Activated CD8-positive, alpha-beta T cell treated with anti-CD3 and anti-CD28 coated beads for 36 hours (primary cell): ENCODE measurements at regions of chr3 and their contacts with region 1.

Region 1: GRCh38 chr3:100068826-100069225 is 45.5 kb downstream of the FILIP1L start:
- DNase-seq: peak; percentile 90
- ATAC-seq: peak; percentile 76
- H3K4me3 Mint-ChIP-seq: no peak overlapping the region
- H3K27ac Mint-ChIP-seq: no peak overlapping the region
- H3K4me1 Mint-ChIP-seq: peaks cover 39% of the 10 kb centered on the region
- H3K27me3 Mint-ChIP-seq: no peaks in the 10 kb centered on the region
- CTCF ChIP-seq: peak; percentile 82

Region 2: DNA sequence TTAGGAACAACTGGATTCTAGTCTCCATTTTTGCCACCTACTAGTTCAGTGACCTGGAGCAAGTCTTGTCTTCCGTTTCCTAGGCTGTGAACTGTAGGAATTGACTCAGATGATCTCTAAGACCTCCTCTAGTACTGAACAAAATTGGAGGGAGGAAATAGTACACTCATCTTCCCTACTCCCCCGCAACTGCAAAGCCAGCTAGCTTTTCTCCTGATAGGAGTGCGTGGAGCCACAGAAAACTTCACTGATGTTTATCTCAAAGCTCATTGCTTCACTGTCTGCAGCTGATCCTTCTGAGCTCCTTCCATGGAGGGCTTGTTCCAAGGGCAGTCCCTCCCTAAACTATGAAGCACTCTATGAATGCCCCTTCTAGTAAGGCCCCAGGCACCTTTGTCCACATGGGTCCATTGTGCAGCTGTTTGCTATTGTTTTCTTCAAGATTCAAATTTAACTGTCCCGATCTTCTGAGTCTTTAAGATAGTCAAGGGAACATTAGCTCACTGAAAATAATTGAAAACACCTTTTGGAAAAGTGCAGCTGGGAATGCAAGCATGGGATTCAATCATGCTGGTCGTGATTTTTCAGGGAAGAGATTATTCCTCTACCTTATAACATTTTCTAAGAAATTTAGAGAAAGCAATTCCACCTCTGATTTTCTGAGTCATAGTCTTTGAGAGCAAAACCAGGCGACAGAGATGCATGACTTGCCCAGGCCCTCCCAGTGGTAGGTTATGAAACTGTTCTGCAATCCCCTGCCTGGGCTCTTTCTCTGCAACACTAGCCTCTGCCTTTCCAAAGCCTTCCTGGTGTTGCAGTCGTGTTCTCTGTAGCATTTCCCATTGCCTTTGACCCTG is 21.2 kb after region 1 on chr3:
- CTCF ChIA-PET with region 1: interaction called, 41 read pairs
- POLR2A ChIA-PET with region 1: interaction called, 4 read pairs
- intact Hi-C with region 1: loop called (anchors 1 kb)
- DNase-seq: peak; percentile 57
- ATAC-seq: peak; percentile 88
- H3K4me3 Mint-ChIP-seq: no peak overlapping the region
- H3K27ac Mint-ChIP-seq: peak overlapping the region; percentile 22
- H3K4me1 Mint-ChIP-seq: peaks cover 29% of the 10 kb centered on the region
- H3K27me3 Mint-ChIP-seq: no peaks in the 10 kb centered on the region
- CTCF ChIP-seq: peak; percentile 54

Region 3: DNA sequence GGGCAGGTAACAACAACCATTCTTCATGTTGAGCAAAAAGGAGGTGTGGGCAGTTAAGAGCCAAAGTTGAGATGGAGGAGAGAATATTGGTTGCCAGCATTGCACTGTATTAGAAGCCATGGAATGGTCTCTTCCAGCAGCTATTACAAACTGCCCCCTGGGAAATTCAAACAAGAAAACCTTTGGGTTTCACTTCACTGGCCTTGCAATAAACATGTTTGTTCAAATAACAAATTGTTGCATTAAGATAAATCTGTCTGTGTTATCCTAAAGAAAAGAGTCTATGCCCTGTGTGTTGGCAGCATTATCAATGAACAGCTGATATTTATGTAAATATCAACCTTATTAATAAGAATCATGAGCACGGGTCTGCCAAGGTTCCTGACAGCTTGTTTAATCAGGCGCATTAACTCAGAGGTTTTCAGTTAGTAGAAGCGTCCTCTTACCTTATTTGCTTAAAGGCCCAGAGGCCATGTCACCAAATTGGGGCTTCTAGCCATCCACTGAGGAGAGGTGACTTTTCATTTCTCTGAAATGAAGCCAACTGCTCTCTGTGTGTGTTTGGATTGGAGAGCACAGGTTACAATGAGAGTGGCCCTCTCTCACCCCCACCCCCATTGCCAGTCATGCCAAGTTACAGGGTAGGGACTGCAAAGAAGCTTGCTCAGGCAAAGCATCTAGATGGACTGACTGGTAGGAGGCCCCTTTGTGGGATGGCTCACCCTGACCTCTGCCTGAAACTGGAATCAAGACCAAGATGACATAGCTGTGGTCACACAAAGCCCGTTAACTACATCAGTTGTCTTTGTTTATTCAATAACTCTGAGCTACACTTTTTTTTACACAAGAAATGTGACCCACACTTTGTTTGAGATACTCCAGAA is 35.0 kb after region 1 on chr3:
- CTCF ChIA-PET with region 1: interaction called, 16 read pairs
- POLR2A ChIA-PET with region 1: no interaction called
- intact Hi-C with region 1: no loop called
- DNase-seq: peak; percentile 60
- ATAC-seq: peak; percentile 88
- H3K4me3 Mint-ChIP-seq: no peak overlapping the region
- H3K27ac Mint-ChIP-seq: peak overlapping the region; percentile 93
- H3K4me1 Mint-ChIP-seq: peaks cover 33% of the 10 kb centered on the region
- H3K27me3 Mint-ChIP-seq: no peaks in the 10 kb centered on the region
- CTCF ChIP-seq: no peak

Region 4: GRCh38 chr3:100195375-100195774 is 126.5 kb after region 1 on chr3:
- CTCF ChIA-PET with region 1: no interaction called
- POLR2A ChIA-PET with region 1: no interaction called
- intact Hi-C with region 1: no loop called
- DNase-seq: no peak
- ATAC-seq: no peak
- H3K4me3 Mint-ChIP-seq: no peak overlapping the region
- H3K27ac Mint-ChIP-seq: no peak overlapping the region
- H3K4me1 Mint-ChIP-seq: no peaks in the 10 kb centered on the region
- H3K27me3 Mint-ChIP-seq: no peaks in the 10 kb centered on the region
- CTCF ChIP-seq: no peak

Region 5: GRCh38 chr3:100245927-100246326 is 177.1 kb after region 1 on chr3:
- CTCF ChIA-PET with region 1: interaction called, 14 read pairs
- POLR2A ChIA-PET with region 1: no interaction called
- intact Hi-C with region 1: no loop called
- DNase-seq: peak; percentile 52
- ATAC-seq: peak; percentile 68
- H3K4me3 Mint-ChIP-seq: no peak overlapping the region
- H3K27ac Mint-ChIP-seq: peak overlapping the region; percentile 19
- H3K4me1 Mint-ChIP-seq: peaks cover 16% of the 10 kb centered on the region
- H3K27me3 Mint-ChIP-seq: peaks cover 1% of the 10 kb centered on the region
- CTCF ChIP-seq: no peak

Region 6: GRCh38 chr3:100254168-100254777 is 185.4 kb after region 1 on chr3:
- CTCF ChIA-PET with region 1: interaction called, 85 read pairs
- POLR2A ChIA-PET with region 1: interaction called, 7 read pairs
- intact Hi-C with region 1: loop called (anchors 1 kb)
- DNase-seq: peak; percentile 67
- ATAC-seq: peak; percentile 83
- H3K4me3 Mint-ChIP-seq: no peak overlapping the region
- H3K27ac Mint-ChIP-seq: no peak overlapping the region
- H3K4me1 Mint-ChIP-seq: peaks cover 13% of the 10 kb centered on the region
- H3K27me3 Mint-ChIP-seq: no peaks in the 10 kb centered on the region
- CTCF ChIP-seq: peak; percentile 78

Region 7: DNA sequence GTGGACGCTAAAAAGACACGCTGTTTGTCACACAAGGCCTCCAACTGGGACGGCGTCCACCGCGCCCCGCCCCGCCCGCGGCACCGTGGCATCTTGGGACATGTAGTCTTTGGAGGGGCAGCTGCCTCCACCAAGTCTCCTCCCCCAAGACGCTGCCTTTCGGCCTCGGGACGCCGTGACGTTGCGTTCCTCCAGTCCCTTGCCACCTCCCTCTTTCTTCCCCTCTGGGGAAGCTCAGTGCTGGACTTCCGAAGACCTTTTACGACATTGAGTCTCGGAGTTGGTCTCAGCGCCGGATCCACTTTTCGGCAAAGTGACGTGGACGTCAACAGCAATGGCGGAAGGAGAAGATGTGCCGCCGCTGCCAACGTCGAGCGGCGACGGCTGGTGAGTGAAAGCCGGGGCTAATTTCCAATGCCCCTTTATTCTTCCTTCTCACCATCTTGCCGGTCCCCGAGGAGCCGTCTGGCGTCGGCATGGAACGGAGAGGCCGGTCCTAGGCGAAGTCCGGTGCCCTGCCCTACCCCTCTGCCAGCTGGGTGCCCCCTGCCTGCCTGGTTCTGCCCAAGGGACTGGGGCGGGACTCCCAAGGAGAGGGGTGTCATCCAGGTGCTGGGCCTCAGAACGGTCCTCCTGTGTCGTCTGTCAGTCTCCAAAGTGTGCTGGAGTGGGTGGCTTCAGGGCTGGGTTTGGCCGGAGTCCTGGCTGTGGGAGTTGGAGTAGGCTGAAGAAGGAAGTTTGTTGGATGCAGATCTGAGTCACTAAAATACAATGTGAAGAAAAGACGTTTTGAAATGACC is 192.1 kb after region 1 on chr3 and contains the start of gene TBC1D23:
- CTCF ChIA-PET with region 1: interaction called, 85 read pairs
- POLR2A ChIA-PET with region 1: interaction called, 8 read pairs
- intact Hi-C with region 1: no loop called
- DNase-seq: peak; percentile 98
- ATAC-seq: peak; percentile 100
- H3K4me3 Mint-ChIP-seq: peak within 1 kb of the TSS; percentile 88
- H3K27ac Mint-ChIP-seq: peak within 1 kb of the TSS; percentile 93
- H3K4me1 Mint-ChIP-seq: peaks cover 53% of the 10 kb centered on the region
- H3K27me3 Mint-ChIP-seq: no peaks in the 10 kb centered on the region
- CTCF ChIP-seq: no peak
- total RNA-seq, gene TBC1D23: 14.4 to 20.5 TPM

Region 8: DNA sequence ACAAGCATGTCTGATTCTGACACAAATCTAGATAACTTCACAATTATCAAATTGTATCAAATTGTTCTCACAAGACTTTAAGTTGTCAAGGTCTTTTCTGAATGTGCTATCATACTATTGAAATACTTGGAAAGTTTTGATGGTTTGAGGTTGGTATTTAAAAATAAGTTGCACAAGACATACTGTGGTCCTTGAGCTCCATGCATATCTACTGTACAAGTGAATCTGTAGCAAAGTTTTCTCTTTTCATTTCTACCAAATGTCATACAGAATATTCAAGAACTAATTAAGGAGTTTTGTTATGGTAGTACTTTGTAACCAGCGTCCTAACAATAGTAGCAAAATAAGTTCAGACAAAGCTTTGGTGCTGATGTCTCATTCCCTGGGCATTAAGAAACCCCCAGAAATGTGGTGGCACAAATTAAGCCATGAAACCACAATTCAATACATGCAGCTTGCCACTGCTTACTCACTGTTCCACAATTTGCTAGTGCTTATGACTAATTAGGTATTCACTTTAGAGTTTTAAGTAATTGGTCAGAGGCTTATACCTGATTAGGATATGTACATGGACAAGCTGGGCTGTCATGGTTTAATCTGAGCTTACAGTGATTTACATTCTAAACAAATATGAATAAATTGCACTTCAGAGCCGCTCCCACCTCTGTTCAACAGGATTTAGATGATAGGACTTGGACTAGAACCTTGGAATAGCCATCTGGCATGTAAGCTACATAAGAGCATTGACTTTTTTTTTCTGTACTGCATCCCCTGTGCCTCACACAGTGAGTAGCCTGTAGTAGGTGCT is 200.8 kb after region 1 on chr3:
- CTCF ChIA-PET with region 1: interaction called, 10 read pairs
- POLR2A ChIA-PET with region 1: no interaction called
- intact Hi-C with region 1: no loop called
- DNase-seq: peak; percentile 63
- ATAC-seq: peak; percentile 89
- H3K4me3 Mint-ChIP-seq: peak overlapping the region; percentile 20
- H3K27ac Mint-ChIP-seq: peak overlapping the region; percentile 81
- H3K4me1 Mint-ChIP-seq: peaks cover 48% of the 10 kb centered on the region
- H3K27me3 Mint-ChIP-seq: no peaks in the 10 kb centered on the region
- CTCF ChIP-seq: no peak

Region 9: GRCh38 chr3:100928638-100929428 is 860.0 kb after region 1 on chr3:
- CTCF ChIA-PET with region 1: no interaction called
- POLR2A ChIA-PET with region 1: no interaction called
- intact Hi-C with region 1: no loop called
- DNase-seq: no peak
- ATAC-seq: no peak
- H3K4me3 Mint-ChIP-seq: no peak overlapping the region
- H3K27ac Mint-ChIP-seq: no peak overlapping the region
- H3K4me1 Mint-ChIP-seq: no peaks in the 10 kb centered on the region
- H3K27me3 Mint-ChIP-seq: peaks cover 8% of the 10 kb centered on the region
- CTCF ChIP-seq: no peak